ENCODE measurements at regions of chr20 and their contacts with region 1.

Region 1: GRCh38 chr20:24992487-24993205 is at the start of gene APMAP:
- DNase-seq: peak; percentile 99
- ATAC-seq: peak; percentile 80 to 94 (median 86)
- H3K4me3 ChIP-seq: peak within 1 kb of the TSS; percentile 95
- H3K4me3 Mint-ChIP-seq: peak within 1 kb of the TSS; percentile 83
- H3K27ac ChIP-seq: peak within 1 kb of the TSS; percentile 98
- H3K27ac Mint-ChIP-seq: peak within 1 kb of the TSS; percentile 93 to 94
- H3K4me1 ChIP-seq: peaks cover 40% of the 10 kb centered on the region
- H3K4me1 Mint-ChIP-seq: peaks cover 56 to 60% of the 10 kb centered on the region in 2 donors
- H3K27me3 ChIP-seq: no peaks in the 10 kb centered on the region
- H3K27me3 Mint-ChIP-seq: no peaks in the 10 kb centered on the region
- CTCF ChIP-seq: no peak
- total RNA-seq, gene APMAP: 205 to 212 (median 207) TPM

Region 2: DNA sequence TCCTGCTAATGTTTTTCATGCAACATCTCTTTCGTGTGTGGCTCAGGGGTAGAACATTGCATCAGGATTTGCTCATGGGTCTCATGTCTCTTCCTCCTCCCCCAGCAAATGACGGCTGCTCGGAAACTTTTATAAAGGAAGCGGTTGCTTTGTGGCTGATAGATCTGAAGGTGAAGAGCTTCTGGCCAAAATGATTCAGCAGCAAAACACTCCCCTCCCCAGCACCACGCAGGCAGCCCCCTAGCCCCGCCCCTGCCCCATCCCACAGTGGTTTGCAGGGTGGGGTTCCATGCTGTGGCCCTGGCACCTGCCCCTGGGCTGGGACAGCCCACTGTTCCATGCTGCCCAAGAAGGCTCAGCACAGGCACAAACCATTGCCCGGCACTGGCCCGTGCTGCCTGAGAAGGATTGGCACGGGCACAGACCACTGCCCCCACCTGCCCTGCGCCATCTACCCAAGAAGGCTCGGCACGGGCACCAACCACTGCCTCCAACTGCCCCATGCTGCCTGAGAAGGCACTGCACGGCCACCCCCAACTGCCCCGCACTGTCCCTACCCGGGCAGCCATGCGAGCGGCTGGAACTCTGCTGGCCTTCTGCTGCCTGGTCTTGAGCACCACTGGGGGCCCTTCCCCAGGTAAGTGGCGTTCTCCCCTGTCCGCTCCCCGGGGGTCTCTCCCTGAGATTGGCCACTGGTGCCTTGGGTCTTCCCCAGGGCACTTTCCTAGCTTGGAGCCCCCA is 43.5 kb before region 1 on chr20 and contains the start of gene CST7:
- intact Hi-C with region 1: loop called (anchors 1 kb)
- DNase-seq: peak; percentile 84 to 92
- ATAC-seq: peak; percentile 70 to 88 (median 79)
- H3K4me3 ChIP-seq: peak within 1 kb of the TSS; percentile 88
- H3K4me3 Mint-ChIP-seq: peak within 1 kb of the TSS; percentile 95
- H3K27ac ChIP-seq: peak within 1 kb of the TSS; percentile 98
- H3K27ac Mint-ChIP-seq: peak within 1 kb of the TSS; percentile 98 to 100
- H3K4me1 ChIP-seq: peaks cover 54% of the 10 kb centered on the region
- H3K4me1 Mint-ChIP-seq: peaks cover 74 to 96% of the 10 kb centered on the region in 2 donors
- H3K27me3 ChIP-seq: no peaks in the 10 kb centered on the region
- H3K27me3 Mint-ChIP-seq: no peaks in the 10 kb centered on the region
- CTCF ChIP-seq: no peak
- total RNA-seq, gene CST7: 590 to 700 (median 619) TPM

Region 3: GRCh38 chr20:25057234-25058050 is 64.8 kb after region 1 on chr20:
- intact Hi-C with region 1: loop called (anchors 1 kb)
- DNase-seq: peak; percentile 90 to 93
- ATAC-seq: peak; percentile 62 to 78 (median 76)
- H3K4me3 ChIP-seq: peak overlapping the region; percentile 91
- H3K4me3 Mint-ChIP-seq: peak overlapping the region; percentile 86
- H3K27ac ChIP-seq: peak overlapping the region; percentile 95
- H3K27ac Mint-ChIP-seq: peak overlapping the region; percentile 90
- H3K4me1 ChIP-seq: peaks cover 55% of the 10 kb centered on the region
- H3K4me1 Mint-ChIP-seq: peaks cover 34 to 39% of the 10 kb centered on the region in 2 donors
- H3K27me3 ChIP-seq: no peaks in the 10 kb centered on the region
- H3K27me3 Mint-ChIP-seq: peaks cover under 1% of the 10 kb centered on the region in 2 donors
- CTCF ChIP-seq: no peak

Region 4: GRCh38 chr20:25195014-25195961 is 202.6 kb after region 1 on chr20 and contains the start of gene ENTPD6:
- intact Hi-C with region 1: loop called (anchors 2 kb)
- DNase-seq: peak; percentile 96
- ATAC-seq: peak; percentile 84 to 91 (median 91)
- H3K4me3 ChIP-seq: peak within 1 kb of the TSS; percentile 82
- H3K4me3 Mint-ChIP-seq: peak within 1 kb of the TSS; percentile 94
- H3K27ac ChIP-seq: peak within 1 kb of the TSS; percentile 89
- H3K27ac Mint-ChIP-seq: peak within 1 kb of the TSS; percentile 79 to 89
- H3K4me1 ChIP-seq: peaks cover 26% of the 10 kb centered on the region
- H3K4me1 Mint-ChIP-seq: peaks cover 34 to 39% of the 10 kb centered on the region in 2 donors
- H3K27me3 ChIP-seq: no peaks in the 10 kb centered on the region
- H3K27me3 Mint-ChIP-seq: peaks cover 0 to 4% of the 10 kb centered on the region in 2 donors
- CTCF ChIP-seq: no peak
- total RNA-seq, gene ENTPD6: 36.4 to 43.1 (median 41.4) TPM

Region 5: DNA sequence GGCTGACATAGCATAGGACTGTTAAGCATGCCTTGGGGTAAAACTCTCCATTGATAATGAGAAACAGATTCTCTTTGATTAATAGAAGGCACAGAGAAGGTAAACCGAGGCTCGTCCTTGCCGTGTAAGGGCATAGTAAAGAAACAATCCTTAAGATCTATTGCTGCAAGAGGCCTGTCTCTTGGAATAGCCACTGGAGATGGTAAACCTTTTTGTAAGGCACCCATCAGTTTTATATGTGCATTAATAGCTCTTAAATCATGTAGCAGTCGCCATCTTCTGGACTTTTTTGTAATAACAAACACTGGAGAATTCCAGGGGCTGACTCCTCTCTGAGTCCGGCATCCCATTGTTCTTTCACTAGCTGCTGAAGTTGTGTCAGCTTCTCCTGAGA is 406.4 kb after region 1 on chr20:
- intact Hi-C with region 1: loop called (anchors 1 kb)
- DNase-seq: peak in 1 of 2 donors; percentile 72
- ATAC-seq: peak; percentile 70 to 81 (median 79)
- H3K4me3 ChIP-seq: no peak overlapping the region
- H3K4me3 Mint-ChIP-seq: no peak overlapping the region
- H3K27ac ChIP-seq: no peak overlapping the region
- H3K27ac Mint-ChIP-seq: no peak overlapping the region
- H3K4me1 ChIP-seq: no peaks in the 10 kb centered on the region
- H3K4me1 Mint-ChIP-seq: no peaks in the 10 kb centered on the region
- H3K27me3 ChIP-seq: no peaks in the 10 kb centered on the region
- H3K27me3 Mint-ChIP-seq: peaks cover 0 to 4% of the 10 kb centered on the region in 2 donors
- CTCF ChIP-seq: peak; percentile 68

Measured in natural killer cell (primary cell).